Activated B cell treated with CpG ODN at 0.5 μM for 24 hours (primary cell): ENCODE measurements at regions of chr15 and their contacts with region 1.

Region 1: GRCh38 chr15:63466378-63467192 is 37.8 kb upstream of the USP3 start:
- DNase-seq: no peak
- ATAC-seq: peak; percentile 93
- H3K4me3 Mint-ChIP-seq: no peak overlapping the region
- H3K27ac Mint-ChIP-seq: no peak overlapping the region
- H3K4me1 Mint-ChIP-seq: peaks cover 29% of the 10 kb centered on the region
- H3K27me3 Mint-ChIP-seq: no peaks in the 10 kb centered on the region
- CTCF ChIP-seq: peak; percentile 56

Region 2: GRCh38 chr15:63288778-63289378 is 177.7 kb before region 1 on chr15:
- CTCF ChIA-PET with region 1: interaction called, 4 read pairs
- POLR2A ChIA-PET with region 1: no interaction called
- intact Hi-C with region 1: loop called (anchors 1 kb)
- DNase-seq: no peak
- ATAC-seq: peak; percentile 45
- H3K4me3 Mint-ChIP-seq: no peak overlapping the region
- H3K27ac Mint-ChIP-seq: no peak overlapping the region
- H3K4me1 Mint-ChIP-seq: peaks cover 15% of the 10 kb centered on the region
- H3K27me3 Mint-ChIP-seq: no peaks in the 10 kb centered on the region
- CTCF ChIP-seq: no peak

Region 3: GRCh38 chr15:63487076-63487757 is 20.6 kb after region 1 on chr15:
- CTCF ChIA-PET with region 1: interaction called, 18 read pairs
- POLR2A ChIA-PET with region 1: interaction called, 9 read pairs
- intact Hi-C with region 1: loop called (anchors 2 kb)
- DNase-seq: peak; percentile 80
- ATAC-seq: peak; percentile 69
- H3K4me3 Mint-ChIP-seq: peak overlapping the region; percentile 75
- H3K27ac Mint-ChIP-seq: peak overlapping the region; percentile 83
- H3K4me1 Mint-ChIP-seq: peaks cover 83% of the 10 kb centered on the region
- H3K27me3 Mint-ChIP-seq: no peaks in the 10 kb centered on the region
- CTCF ChIP-seq: no peak

Region 4: GRCh38 chr15:63539521-63539920 is 72.9 kb after region 1 on chr15:
- CTCF ChIA-PET with region 1: interaction called, 11 read pairs
- POLR2A ChIA-PET with region 1: no interaction called
- intact Hi-C with region 1: loop called (anchors 2 kb)
- DNase-seq: no peak
- ATAC-seq: no peak
- H3K4me3 Mint-ChIP-seq: no peak overlapping the region
- H3K27ac Mint-ChIP-seq: peak overlapping the region; percentile 79
- H3K4me1 Mint-ChIP-seq: peaks cover 83% of the 10 kb centered on the region
- H3K27me3 Mint-ChIP-seq: no peaks in the 10 kb centered on the region
- CTCF ChIP-seq: no peak

Region 5: DNA sequence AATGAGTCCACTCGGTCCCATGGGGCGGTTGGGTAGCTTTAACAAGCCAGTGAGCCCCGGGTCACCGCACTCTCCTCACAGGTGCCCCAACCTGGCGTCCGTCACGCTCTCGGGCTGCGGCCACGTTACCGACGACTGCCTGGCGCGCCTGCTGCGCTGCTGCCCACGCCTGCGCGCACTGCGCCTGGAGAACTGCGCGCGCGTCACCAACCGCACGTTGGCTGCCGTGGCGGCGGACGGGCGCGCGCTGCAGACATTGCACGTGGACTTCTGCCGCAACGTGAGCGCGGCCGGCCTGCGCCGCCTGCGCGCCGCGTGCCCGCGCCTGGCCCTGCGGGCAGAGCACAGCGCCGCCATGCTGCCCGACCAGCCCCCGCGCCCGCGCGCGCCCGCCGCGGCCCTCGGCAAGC is 134.0 kb after region 1 on chr15:
- CTCF ChIA-PET with region 1: interaction called, 27 read pairs
- POLR2A ChIA-PET with region 1: interaction called, 4 read pairs
- intact Hi-C with region 1: loop called (anchors 1 kb)
- DNase-seq: peak; percentile 90
- ATAC-seq: peak; percentile 71
- H3K4me3 Mint-ChIP-seq: peak overlapping the region; percentile 91
- H3K27ac Mint-ChIP-seq: peak overlapping the region; percentile 91
- H3K4me1 Mint-ChIP-seq: peaks cover 75% of the 10 kb centered on the region
- H3K27me3 Mint-ChIP-seq: no peaks in the 10 kb centered on the region
- CTCF ChIP-seq: no peak

Region 6: GRCh38 chr15:63668601-63669000 is 202.0 kb after region 1 on chr15:
- CTCF ChIA-PET with region 1: no interaction called
- POLR2A ChIA-PET with region 1: no interaction called
- intact Hi-C with region 1: loop called (anchors 10 kb)
- DNase-seq: no peak
- ATAC-seq: peak; percentile 69
- H3K4me3 Mint-ChIP-seq: peak overlapping the region; percentile 66
- H3K27ac Mint-ChIP-seq: peak overlapping the region; percentile 81
- H3K4me1 Mint-ChIP-seq: peaks cover 24% of the 10 kb centered on the region
- H3K27me3 Mint-ChIP-seq: no peaks in the 10 kb centered on the region
- CTCF ChIP-seq: no peak

Region 7: DNA sequence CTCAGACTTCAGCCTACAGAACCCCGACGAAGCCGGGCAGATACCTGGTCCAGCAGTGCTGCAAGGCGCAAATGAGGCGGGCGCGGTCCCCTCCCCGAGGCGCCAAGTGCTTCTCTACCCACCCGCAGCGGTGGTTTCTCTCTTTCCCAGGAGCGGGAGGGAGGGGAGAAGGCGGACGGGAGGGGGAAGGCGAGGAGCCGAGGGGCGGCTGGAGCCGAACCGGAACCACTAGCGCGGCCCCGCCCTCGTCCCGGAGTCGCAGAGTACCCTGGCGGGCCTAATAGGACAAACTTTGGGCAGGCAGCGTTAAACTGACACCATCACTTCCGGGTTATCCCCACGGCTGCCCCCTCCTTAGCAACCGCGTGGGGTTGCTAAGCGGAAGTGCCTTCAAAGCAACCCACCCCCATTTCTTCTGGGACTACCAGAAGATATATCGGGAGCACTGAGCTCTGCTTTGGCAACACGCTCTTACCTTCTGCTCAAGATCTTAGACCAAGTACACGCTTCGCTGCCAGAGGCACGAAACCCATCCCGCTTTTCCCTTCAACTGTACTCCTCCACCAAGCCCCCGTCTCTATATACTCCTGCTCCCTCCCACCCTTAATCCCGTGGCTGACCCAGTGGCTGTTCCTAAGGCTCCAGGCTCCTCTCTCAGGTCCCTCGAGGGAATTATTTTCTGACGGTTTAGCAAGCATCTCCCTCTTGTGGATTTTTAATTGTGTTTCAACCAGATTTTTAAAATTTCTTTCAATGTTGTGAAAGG is 889.5 kb after region 1 on chr15 and contains the start of gene CSNK1G1:
- CTCF ChIA-PET with region 1: no interaction called
- POLR2A ChIA-PET with region 1: no interaction called
- intact Hi-C with region 1: no loop called
- DNase-seq: peak; percentile 84
- ATAC-seq: peak; percentile 98
- H3K4me3 Mint-ChIP-seq: peak within 1 kb of the TSS; percentile 87
- H3K27ac Mint-ChIP-seq: peak within 1 kb of the TSS; percentile 80
- H3K4me1 Mint-ChIP-seq: peaks cover 17% of the 10 kb centered on the region
- H3K27me3 Mint-ChIP-seq: no peaks in the 10 kb centered on the region
- CTCF ChIP-seq: no peak
- total RNA-seq, gene CSNK1G1: 26.1 and 26.6 TPM in 2 replicates

Region 8: GRCh38 chr15:64596701-64597476 is 1130.3 kb after region 1 on chr15:
- CTCF ChIA-PET with region 1: no interaction called
- POLR2A ChIA-PET with region 1: no interaction called
- intact Hi-C with region 1: no loop called
- DNase-seq: no peak
- ATAC-seq: peak; percentile 37
- H3K4me3 Mint-ChIP-seq: peak overlapping the region; percentile 75
- H3K27ac Mint-ChIP-seq: peak overlapping the region; percentile 74
- H3K4me1 Mint-ChIP-seq: peaks cover 43% of the 10 kb centered on the region
- H3K27me3 Mint-ChIP-seq: no peaks in the 10 kb centered on the region
- CTCF ChIP-seq: no peak